Uterus (tissue), 4 donors: ENCODE measurements at regions of chr1 and their contacts with region 1.

Region 1: DNA sequence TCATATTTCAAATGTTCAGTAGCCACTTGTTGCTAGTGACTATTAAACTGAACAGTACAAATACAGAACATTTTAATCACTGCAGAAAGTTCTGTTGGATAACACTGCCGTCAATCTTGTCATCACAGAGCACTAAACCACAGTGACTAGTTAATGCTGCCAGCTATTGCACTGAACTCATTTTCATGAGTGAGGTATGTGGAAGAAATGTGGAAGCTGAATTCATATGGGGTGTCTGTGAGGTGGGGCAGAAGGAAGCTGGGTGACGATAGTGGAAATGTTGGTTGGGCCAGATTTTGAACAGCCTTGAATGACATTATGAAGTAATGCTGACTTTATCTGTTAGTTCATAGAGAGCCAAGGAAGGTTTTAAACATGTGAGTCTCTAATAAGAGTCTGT is 49.6 kb downstream of the OSBPL9 start:
- DNase-seq: no peak
- H3K4me3 ChIP-seq: no peak overlapping the region
- H3K27ac ChIP-seq: peak overlapping the region; percentile 55 to 67
- H3K4me1 ChIP-seq: peaks cover 4 to 22% of the 10 kb centered on the region in 2 donors
- H3K27me3 ChIP-seq: no peaks in the 10 kb centered on the region
- CTCF ChIP-seq: no peak
- POLR2A ChIP-seq: no peak

Region 2: DNA sequence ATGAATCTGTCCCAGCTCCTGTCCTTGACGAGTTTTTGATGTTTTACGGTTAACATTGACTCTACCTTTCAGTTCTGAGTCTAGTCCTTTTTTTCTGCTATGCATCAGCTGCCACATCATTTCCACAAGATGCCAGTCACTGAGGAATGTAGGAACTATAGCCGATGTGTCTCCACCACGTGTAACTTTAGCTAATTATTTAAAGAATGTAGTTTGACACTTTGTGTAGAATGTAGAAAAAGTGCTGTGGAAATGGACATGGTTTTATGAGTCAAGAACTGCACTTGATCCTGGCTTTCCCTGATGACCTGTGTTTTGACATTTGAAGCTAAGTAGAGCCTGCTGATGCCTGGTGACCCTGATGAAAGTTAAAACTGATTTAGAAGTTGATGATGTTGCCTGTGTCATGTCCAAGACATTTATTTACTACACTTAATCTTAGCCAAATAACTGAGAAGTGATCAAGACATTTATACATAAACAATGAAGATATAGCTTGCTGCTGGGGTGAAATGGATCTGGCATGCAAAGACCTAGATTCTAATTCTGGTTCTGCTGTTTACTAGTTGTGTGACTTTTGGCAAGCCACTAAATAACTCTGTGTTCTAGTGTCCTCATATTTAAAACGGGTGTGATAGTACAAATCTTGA is 54.0 kb before region 1 on chr1:
- intact Hi-C with region 1: loop called (anchors 5 kb)
- DNase-seq: no peak
- H3K4me3 ChIP-seq: no peak overlapping the region
- H3K27ac ChIP-seq: peak overlapping the region; percentile 70 to 71
- H3K4me1 ChIP-seq: peaks cover 0 to 6% of the 10 kb centered on the region in 2 donors
- H3K27me3 ChIP-seq: no peaks in the 10 kb centered on the region
- CTCF ChIP-seq: no peak
- POLR2A ChIP-seq: no peak